Activated B cell treated with CpG ODN at 0.5 μM for 24 hours (primary cell): ENCODE measurements at regions of chr16 and their contacts with region 1.

Region 1: DNA sequence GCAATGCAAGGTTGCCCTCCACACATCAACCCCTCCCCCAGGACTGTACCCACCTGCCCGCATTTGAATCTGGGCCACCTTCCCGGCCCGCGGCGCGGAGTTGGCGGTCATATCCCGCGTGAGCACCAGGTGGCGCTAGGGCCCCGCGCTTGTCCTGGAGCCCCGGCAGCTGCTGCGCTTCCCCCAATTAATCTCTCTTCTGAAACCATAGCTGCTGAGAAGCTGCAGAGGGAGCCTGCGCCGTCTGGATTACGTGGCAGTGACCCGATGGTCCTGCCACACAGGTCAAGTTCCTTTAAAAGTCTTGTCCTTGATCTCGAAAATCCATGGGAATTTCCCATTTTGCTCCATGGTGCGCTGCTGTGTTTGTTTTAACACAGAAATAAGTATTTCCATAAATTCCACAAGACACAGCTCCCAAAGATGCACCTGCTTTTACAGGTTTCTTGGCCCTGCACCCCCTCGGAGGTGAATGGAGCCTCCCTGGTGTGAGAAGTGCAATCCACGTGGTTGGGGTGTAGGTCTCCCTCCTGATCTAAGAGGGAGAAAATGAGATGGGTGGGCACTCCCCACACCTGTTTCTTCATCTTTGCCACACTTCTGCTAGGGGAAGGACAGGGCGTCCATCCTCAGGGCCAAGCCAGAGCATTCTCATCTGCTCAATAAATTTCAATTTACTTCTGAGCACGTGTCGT is 22.1 kb downstream of the COX4I1 start:
- DNase-seq: peak; percentile 88
- ATAC-seq: peak; percentile 93
- H3K4me3 Mint-ChIP-seq: no peak overlapping the region
- H3K27ac Mint-ChIP-seq: no peak overlapping the region
- H3K4me1 Mint-ChIP-seq: peaks cover 29% of the 10 kb centered on the region
- H3K27me3 Mint-ChIP-seq: no peaks in the 10 kb centered on the region
- CTCF ChIP-seq: peak; percentile 69

Region 2: GRCh38 chr16:85888405-85889331 is 67.1 kb after region 1 on chr16:
- CTCF ChIA-PET with region 1: interaction called, 69 read pairs
- POLR2A ChIA-PET with region 1: interaction called, 7 read pairs
- intact Hi-C with region 1: no loop called
- DNase-seq: no peak
- ATAC-seq: peak; percentile 90
- H3K4me3 Mint-ChIP-seq: peak overlapping the region; percentile 44
- H3K27ac Mint-ChIP-seq: peak overlapping the region; percentile 90
- H3K4me1 Mint-ChIP-seq: peaks cover 46% of the 10 kb centered on the region
- H3K27me3 Mint-ChIP-seq: no peaks in the 10 kb centered on the region
- CTCF ChIP-seq: no peak

Region 3: GRCh38 chr16:85916141-85916890 is 94.7 kb after region 1 on chr16:
- CTCF ChIA-PET with region 1: interaction called, 33 read pairs
- POLR2A ChIA-PET with region 1: interaction called, 8 read pairs
- intact Hi-C with region 1: loop called (anchors 1 kb)
- DNase-seq: no peak
- ATAC-seq: no peak
- H3K4me3 Mint-ChIP-seq: peak overlapping the region; percentile 16
- H3K27ac Mint-ChIP-seq: peak overlapping the region; percentile 97
- H3K4me1 Mint-ChIP-seq: peaks cover 86% of the 10 kb centered on the region
- H3K27me3 Mint-ChIP-seq: no peaks in the 10 kb centered on the region
- CTCF ChIP-seq: no peak

Region 4: DNA sequence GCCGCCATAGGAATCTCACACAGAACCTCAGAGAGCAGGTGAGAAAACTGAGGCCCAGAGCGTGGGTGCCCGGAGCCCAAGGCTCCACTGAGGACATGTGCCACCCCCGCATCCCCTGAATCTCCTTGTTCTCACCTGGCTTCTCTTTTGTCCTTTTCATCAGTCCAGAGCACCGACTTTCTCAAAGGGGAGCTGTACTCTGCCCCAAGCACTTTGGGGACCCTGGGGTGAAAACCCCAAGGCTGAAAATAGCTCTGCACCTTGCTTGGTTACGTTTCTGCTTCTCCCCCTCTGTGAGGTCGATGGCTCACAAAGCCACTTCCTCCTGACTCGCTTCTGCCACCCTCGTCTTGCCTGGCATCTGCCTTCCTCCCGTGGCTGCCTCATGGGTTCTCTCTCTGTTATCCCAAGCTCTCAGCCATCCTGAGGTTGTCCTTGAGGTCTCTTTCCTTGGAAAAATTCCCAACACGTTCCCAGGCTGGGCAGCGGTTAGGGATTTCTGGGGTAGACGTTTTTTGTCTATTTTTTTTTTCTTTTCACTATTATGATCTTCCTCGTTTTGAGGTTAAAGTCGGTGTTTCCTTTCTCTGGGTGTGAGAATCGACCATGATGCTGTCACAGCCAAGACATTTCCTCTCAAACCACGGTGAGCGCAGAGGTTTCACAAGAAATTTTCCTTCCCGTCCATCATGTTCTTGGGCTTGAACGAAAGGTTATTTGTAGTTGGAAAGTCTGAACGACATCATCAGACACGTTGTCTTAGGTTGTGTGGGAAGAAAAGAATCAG is 114.6 kb after region 1 on chr16:
- CTCF ChIA-PET with region 1: interaction called, 17 read pairs
- POLR2A ChIA-PET with region 1: interaction called, 9 read pairs
- intact Hi-C with region 1: loop called (anchors 1 kb)
- DNase-seq: peak; percentile 66
- ATAC-seq: peak; percentile 78
- H3K4me3 Mint-ChIP-seq: peak overlapping the region; percentile 75
- H3K27ac Mint-ChIP-seq: peak overlapping the region; percentile 98
- H3K4me1 Mint-ChIP-seq: peaks cover 90% of the 10 kb centered on the region
- H3K27me3 Mint-ChIP-seq: no peaks in the 10 kb centered on the region
- CTCF ChIP-seq: no peak

Region 5: DNA sequence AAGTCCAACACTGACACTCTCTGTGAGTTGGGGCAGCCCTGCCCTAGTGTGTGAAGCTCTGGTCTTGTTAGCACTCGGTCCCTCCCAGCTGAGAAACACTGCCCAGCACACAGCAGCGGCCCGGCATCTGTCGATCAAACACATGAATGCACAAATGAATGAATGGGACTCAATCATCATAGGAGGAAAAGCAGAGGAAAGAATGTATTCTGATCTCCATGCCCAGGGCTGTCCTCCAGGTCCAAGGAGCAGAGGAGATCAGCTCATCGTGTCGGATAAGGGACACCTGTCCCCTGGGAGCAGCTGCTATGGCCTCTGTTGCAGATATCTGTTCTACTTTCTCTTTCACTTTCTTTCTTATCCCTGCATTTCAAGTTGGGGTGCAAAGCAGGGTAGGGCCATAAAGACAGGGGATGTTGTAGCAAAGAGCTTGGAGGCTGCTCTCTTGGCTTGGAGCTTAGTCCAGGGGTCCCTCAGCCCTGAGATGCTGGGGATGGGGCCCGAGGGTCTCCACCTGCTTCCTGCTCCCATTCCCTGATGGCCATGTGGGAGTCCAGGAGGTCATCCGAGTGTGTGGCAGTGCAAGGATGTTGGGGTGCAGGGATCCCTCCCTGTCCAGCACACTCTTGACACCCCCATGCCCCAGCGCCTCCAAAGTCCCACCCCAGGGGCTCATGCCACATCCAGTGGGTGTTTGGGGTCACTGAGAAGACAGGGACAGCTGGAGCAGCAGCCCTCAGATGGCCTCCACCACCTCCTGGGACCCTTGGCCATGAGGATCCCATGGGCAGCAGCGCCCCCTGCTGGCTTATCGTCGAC is 165.6 kb after region 1 on chr16:
- CTCF ChIA-PET with region 1: interaction called, 296 read pairs
- POLR2A ChIA-PET with region 1: interaction called, 27 read pairs
- intact Hi-C with region 1: loop called (anchors 1 kb)
- DNase-seq: peak; percentile 36
- ATAC-seq: no peak
- H3K4me3 Mint-ChIP-seq: peak overlapping the region; percentile 5
- H3K27ac Mint-ChIP-seq: peak overlapping the region; percentile 47
- H3K4me1 Mint-ChIP-seq: peaks cover 98% of the 10 kb centered on the region
- H3K27me3 Mint-ChIP-seq: no peaks in the 10 kb centered on the region
- CTCF ChIP-seq: no peak

Region 6: GRCh38 chr16:86016201-86016871 is 194.7 kb after region 1 on chr16:
- CTCF ChIA-PET with region 1: interaction called, 232 read pairs
- POLR2A ChIA-PET with region 1: interaction called, 27 read pairs
- intact Hi-C with region 1: loop called (anchors 1 kb)
- DNase-seq: peak; percentile 32
- ATAC-seq: peak; percentile 60
- H3K4me3 Mint-ChIP-seq: no peak overlapping the region
- H3K27ac Mint-ChIP-seq: no peak overlapping the region
- H3K4me1 Mint-ChIP-seq: peaks cover 36% of the 10 kb centered on the region
- H3K27me3 Mint-ChIP-seq: peaks cover 6% of the 10 kb centered on the region
- CTCF ChIP-seq: no peak

Region 7: GRCh38 chr16:86519649-86520316 is 698.2 kb after region 1 on chr16:
- CTCF ChIA-PET with region 1: interaction called, 48 read pairs
- POLR2A ChIA-PET with region 1: no interaction called
- intact Hi-C with region 1: loop called (anchors 1 kb)
- DNase-seq: peak; percentile 43
- ATAC-seq: peak; percentile 60
- H3K4me3 Mint-ChIP-seq: no peak overlapping the region
- H3K27ac Mint-ChIP-seq: no peak overlapping the region
- H3K4me1 Mint-ChIP-seq: peaks cover 5% of the 10 kb centered on the region
- H3K27me3 Mint-ChIP-seq: peaks cover 56% of the 10 kb centered on the region
- CTCF ChIP-seq: peak; percentile 92